CD4-positive, alpha-beta memory T cell (primary cell): ENCODE measurements at regions of chr16 and their contacts with region 1.

Region 1: GRCh38 chr16:31117391-31118197 is at the start of gene KAT8:
- DNase-seq: peak; percentile 98 to 99 (median 98)
- H3K4me3 ChIP-seq: peak within 1 kb of the TSS; percentile 63 to 76
- H3K4me3 Mint-ChIP-seq: peak within 1 kb of the TSS; percentile 83 to 93 (median 89)
- H3K27ac ChIP-seq: peak within 1 kb of the TSS; percentile 89
- H3K27ac Mint-ChIP-seq: peak within 1 kb of the TSS; percentile 80 to 98 (median 95)
- H3K4me1 ChIP-seq: peaks cover 11% of the 10 kb centered on the region
- H3K4me1 Mint-ChIP-seq: peaks cover 9 to 19% (median 13%) of the 10 kb centered on the region in 4 donors
- H3K27me3 ChIP-seq: no peaks in the 10 kb centered on the region
- H3K27me3 Mint-ChIP-seq: no peaks in the 10 kb centered on the region
- total RNA-seq, gene KAT8: 90.8 to 94.2 TPM

Region 2: GRCh38 chr16:30997000-30997886 is 120.4 kb before region 1 on chr16:
- CTCF ChIA-PET with region 1: no interaction called
- POLR2A ChIA-PET with region 1: no interaction called
- intact Hi-C with region 1: loop called (anchors 1 kb)
- DNase-seq: peak; percentile 59 to 82 (median 66)
- H3K4me3 ChIP-seq: peak overlapping the region; percentile 60 to 69
- H3K4me3 Mint-ChIP-seq: peak overlapping the region; percentile 67 to 86 (median 82)
- H3K27ac ChIP-seq: peak overlapping the region; percentile 47
- H3K27ac Mint-ChIP-seq: peak overlapping the region in 6 of 7 donors; percentile 54 to 89 (median 85)
- H3K4me1 ChIP-seq: peaks cover 11% of the 10 kb centered on the region
- H3K4me1 Mint-ChIP-seq: peaks cover 2 to 6% (median 4%) of the 10 kb centered on the region in 4 donors
- H3K27me3 ChIP-seq: no peaks in the 10 kb centered on the region
- H3K27me3 Mint-ChIP-seq: no peaks in the 10 kb centered on the region

Region 3: DNA sequence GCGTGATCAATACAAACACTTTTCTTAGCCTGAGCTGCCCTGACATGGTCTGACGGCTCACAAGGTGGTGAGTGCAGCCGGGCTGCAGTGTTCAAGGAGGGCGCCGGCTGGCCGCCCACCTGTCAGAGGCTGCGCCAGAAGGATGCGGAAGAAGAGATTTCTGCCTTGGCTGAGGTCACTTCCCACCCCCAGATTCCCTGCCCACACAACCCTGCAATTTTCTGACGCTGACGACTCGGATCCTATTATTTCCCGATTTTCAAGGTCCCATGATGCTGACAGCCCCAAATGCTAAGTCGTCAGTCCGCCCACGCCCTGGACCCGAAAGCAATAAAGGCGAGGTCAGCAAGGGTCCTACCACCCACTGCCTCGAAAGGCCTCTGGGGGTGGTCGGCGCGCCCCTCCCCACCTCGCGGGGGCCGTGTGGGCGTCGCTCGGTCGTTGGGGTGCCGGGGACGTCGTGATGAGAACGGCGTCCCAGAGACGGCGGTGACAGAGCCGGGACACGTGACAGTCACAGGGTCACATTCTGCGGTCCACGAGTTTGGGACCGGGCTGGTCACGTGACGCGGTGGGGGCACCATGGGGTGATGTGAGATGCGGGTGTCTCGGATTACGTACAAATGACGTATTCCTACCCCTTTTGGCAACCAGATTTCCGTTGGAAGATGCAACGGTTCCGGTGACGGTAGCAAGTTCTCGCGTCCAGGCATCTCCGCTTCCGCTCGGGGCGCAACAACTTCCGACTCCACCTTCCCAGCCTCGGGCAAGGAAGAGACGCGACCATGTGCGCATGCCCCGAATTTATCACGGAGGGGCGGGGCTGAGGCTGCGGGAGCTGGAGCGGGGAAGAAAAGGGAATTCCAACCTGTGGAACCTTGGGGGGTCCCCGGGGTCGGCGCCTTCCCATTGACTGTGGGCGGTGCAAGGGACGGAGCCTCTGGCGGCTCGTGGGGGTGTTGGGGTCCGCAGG is 84.6 kb before region 1 on chr16 and contains the start of gene STX4:
- CTCF ChIA-PET with region 1: no interaction called
- POLR2A ChIA-PET with region 1: interaction called, 5 read pairs
- intact Hi-C with region 1: loop called (anchors 1 kb)
- DNase-seq: peak; percentile 95 to 100 (median 98)
- H3K4me3 ChIP-seq: peak within 1 kb of the TSS; percentile 83 to 97
- H3K4me3 Mint-ChIP-seq: peak within 1 kb of the TSS; percentile 91 to 98 (median 95)
- H3K27ac ChIP-seq: peak within 1 kb of the TSS; percentile 86
- H3K27ac Mint-ChIP-seq: peak within 1 kb of the TSS; percentile 93 to 98 (median 98)
- H3K4me1 ChIP-seq: peaks cover 24% of the 10 kb centered on the region
- H3K4me1 Mint-ChIP-seq: peaks cover 6 to 38% (median 22%) of the 10 kb centered on the region in 4 donors
- H3K27me3 ChIP-seq: no peaks in the 10 kb centered on the region
- H3K27me3 Mint-ChIP-seq: no peaks in the 10 kb centered on the region
- total RNA-seq, gene STX4: 106 to 111 TPM

Region 4: GRCh38 chr16:31179747-31180459 is 62.3 kb after region 1 on chr16 and contains the start of gene FUS:
- CTCF ChIA-PET with region 1: no interaction called
- POLR2A ChIA-PET with region 1: interaction called, 75 read pairs
- intact Hi-C with region 1: loop called (anchors 1 kb)
- DNase-seq: peak; percentile 89 to 95 (median 94)
- H3K4me3 ChIP-seq: peak within 1 kb of the TSS; percentile 96 to 97
- H3K4me3 Mint-ChIP-seq: peak within 1 kb of the TSS; percentile 97 to 99 (median 98)
- H3K27ac ChIP-seq: peak within 1 kb of the TSS; percentile 89
- H3K27ac Mint-ChIP-seq: peak within 1 kb of the TSS; percentile 95 to 100 (median 99)
- H3K4me1 ChIP-seq: peaks cover 66% of the 10 kb centered on the region
- H3K4me1 Mint-ChIP-seq: peaks cover 41 to 77% (median 54%) of the 10 kb centered on the region in 4 donors
- H3K27me3 ChIP-seq: no peaks in the 10 kb centered on the region
- H3K27me3 Mint-ChIP-seq: no peaks in the 10 kb centered on the region
- total RNA-seq, gene FUS: 500 to 536 TPM

Region 5: DNA sequence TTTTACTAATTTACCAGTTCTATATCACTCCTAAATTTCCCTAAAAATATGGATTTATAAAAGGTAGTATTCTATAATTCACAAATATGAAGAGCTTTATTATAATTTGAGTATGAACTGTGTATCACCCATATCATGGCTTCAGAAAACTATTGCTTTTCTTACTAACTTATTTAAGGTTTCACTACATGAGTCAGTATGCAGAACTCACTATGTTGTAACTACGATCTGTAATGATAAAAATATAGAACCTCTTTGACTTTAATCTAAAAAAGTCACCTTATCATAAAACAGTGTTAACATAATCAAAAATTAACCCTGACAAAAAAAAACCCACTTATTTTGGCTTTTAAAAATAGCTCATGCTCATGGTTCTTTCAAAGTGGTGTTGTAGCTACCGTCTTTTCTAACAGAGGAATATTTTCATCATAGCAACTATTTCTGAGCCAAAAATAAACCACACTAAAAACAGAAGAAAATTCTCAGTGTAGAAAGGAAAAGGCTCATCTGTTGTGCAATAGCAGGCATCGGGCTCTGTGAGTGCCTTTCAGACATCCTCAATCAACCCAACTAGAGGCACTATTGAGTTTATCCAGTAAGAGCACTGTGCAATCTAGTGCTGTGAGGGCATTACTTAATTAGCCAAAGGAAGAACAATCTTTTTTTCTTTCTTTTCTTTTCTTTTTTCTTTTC is 184.3 kb after region 1 on chr16:
- CTCF ChIA-PET with region 1: no interaction called
- POLR2A ChIA-PET with region 1: no interaction called
- intact Hi-C with region 1: no loop called
- DNase-seq: no peak
- H3K4me3 ChIP-seq: no peak overlapping the region
- H3K4me3 Mint-ChIP-seq: no peak overlapping the region
- H3K27ac ChIP-seq: no peak overlapping the region
- H3K27ac Mint-ChIP-seq: no peak overlapping the region
- H3K4me1 ChIP-seq: no peaks in the 10 kb centered on the region
- H3K4me1 Mint-ChIP-seq: peaks cover 0 to 2% (median 0%) of the 10 kb centered on the region in 4 donors
- H3K27me3 ChIP-seq: no peaks in the 10 kb centered on the region
- H3K27me3 Mint-ChIP-seq: peaks cover 10 to 13% of the 10 kb centered on the region in 2 donors

Region 6: GRCh38 chr16:31577411-31577810 is 459.8 kb after region 1 on chr16:
- CTCF ChIA-PET with region 1: no interaction called
- POLR2A ChIA-PET with region 1: no interaction called
- intact Hi-C with region 1: no loop called
- DNase-seq: no peak
- H3K4me3 ChIP-seq: no peak overlapping the region
- H3K4me3 Mint-ChIP-seq: no peak overlapping the region
- H3K27ac ChIP-seq: no peak overlapping the region
- H3K27ac Mint-ChIP-seq: no peak overlapping the region
- H3K4me1 ChIP-seq: no peaks in the 10 kb centered on the region
- H3K4me1 Mint-ChIP-seq: no peaks in the 10 kb centered on the region
- H3K27me3 ChIP-seq: no peaks in the 10 kb centered on the region
- H3K27me3 Mint-ChIP-seq: peaks cover 5 to 7% of the 10 kb centered on the region in 2 donors